ENCODE measurements at regions of chr10 and their contacts with region 1.

Region 1: GRCh38 chr10:101840741-101841453 is 2.7 kb downstream of the KCNIP2 start:
- DNase-seq: peak; percentile 88
- ATAC-seq: peak; percentile 59
- H3K4me3 ChIP-seq: peak overlapping the region in 4 of 5 experiments; percentile 44 to 79 (median 68)
- H3K4me3 Mint-ChIP-seq: peak overlapping the region; percentile 95
- H3K27ac ChIP-seq: peak overlapping the region in 1 of 2 donors; percentile 51
- H3K27ac Mint-ChIP-seq: peak overlapping the region; percentile 92
- H3K4me1 ChIP-seq: peaks cover 50 to 60% of the 10 kb centered on the region in 2 donors
- H3K4me1 Mint-ChIP-seq: peaks cover 52% of the 10 kb centered on the region
- H3K27me3 ChIP-seq: no peaks in the 10 kb centered on the region
- H3K27me3 Mint-ChIP-seq: no peaks in the 10 kb centered on the region
- CTCF ChIP-seq: peak; percentile 91

Region 2: GRCh38 chr10:101782811-101783735 is 57.8 kb before region 1 on chr10 and contains the start of gene NPM3:
- CTCF ChIA-PET with region 1: interaction called, 21 read pairs
- POLR2A ChIA-PET with region 1: no interaction called
- intact Hi-C with region 1: loop called (anchors 2 kb)
- DNase-seq: peak; percentile 78
- ATAC-seq: peak; percentile 66
- H3K4me3 ChIP-seq: peak within 1 kb of the TSS; percentile 18 to 73 (median 67)
- H3K4me3 Mint-ChIP-seq: peak within 1 kb of the TSS; percentile 99
- H3K27ac ChIP-seq: peak within 1 kb of the TSS; percentile 8 to 69
- H3K27ac Mint-ChIP-seq: peak within 1 kb of the TSS; percentile 90
- H3K4me1 ChIP-seq: peaks cover 32 to 57% of the 10 kb centered on the region in 2 donors
- H3K4me1 Mint-ChIP-seq: peaks cover 55% of the 10 kb centered on the region
- H3K27me3 ChIP-seq: peaks cover 0 to 16% (median 7%) of the 10 kb centered on the region in 4 experiments
- H3K27me3 Mint-ChIP-seq: peaks cover 6% of the 10 kb centered on the region
- CTCF ChIP-seq: no peak
- total RNA-seq, gene NPM3: 13.4 and 13.5 TPM in 2 replicates

Region 3: DNA sequence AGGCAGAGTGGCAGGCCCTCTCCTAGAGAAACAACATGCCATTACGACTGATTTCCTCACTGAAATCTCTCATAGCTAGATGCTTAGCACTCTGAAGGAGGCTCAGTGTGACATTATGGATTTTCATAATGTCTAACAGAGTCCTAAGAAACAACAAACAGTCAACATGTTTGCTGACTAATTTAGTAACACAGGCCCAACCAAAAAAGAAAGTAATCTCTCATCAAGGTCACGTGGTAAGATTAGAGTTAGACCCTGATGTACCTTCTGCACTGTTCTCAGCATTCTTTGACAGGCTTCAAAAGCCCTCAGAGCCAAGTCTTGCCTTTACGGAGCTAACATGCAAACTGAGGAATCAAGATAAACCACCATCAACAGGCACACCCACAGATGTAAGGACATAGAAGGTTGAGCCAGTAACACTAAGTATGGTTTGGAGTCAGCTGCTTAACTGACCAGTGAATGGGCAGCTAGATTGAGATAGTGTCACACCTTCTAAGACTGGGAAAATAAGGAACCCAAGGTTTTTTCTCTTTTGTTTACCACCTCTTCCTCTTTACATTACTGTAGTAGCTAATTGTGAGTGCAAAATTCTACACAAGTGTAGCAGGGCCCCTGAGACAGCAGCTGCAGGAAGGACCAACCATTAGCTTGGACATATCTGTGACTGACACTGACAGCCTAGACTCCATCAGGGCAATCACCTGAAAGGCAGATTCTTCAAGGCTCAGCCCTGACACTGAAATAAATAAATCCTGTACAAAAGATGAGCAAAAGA is 18.0 kb after region 1 on chr10:
- CTCF ChIA-PET with region 1: interaction called, 48 read pairs
- POLR2A ChIA-PET with region 1: interaction called, 3 read pairs
- intact Hi-C with region 1: no loop called
- DNase-seq: no peak
- ATAC-seq: no peak
- H3K4me3 ChIP-seq: no peak overlapping the region
- H3K4me3 Mint-ChIP-seq: peak overlapping the region; percentile 35
- H3K27ac ChIP-seq: peak overlapping the region; percentile 47 to 52
- H3K27ac Mint-ChIP-seq: peak overlapping the region; percentile 73
- H3K4me1 ChIP-seq: peaks cover 10 to 14% of the 10 kb centered on the region in 2 donors
- H3K4me1 Mint-ChIP-seq: peaks cover 21% of the 10 kb centered on the region
- H3K27me3 ChIP-seq: no peaks in the 10 kb centered on the region
- H3K27me3 Mint-ChIP-seq: no peaks in the 10 kb centered on the region
- CTCF ChIP-seq: no peak

Region 4: GRCh38 chr10:101897633-101898032 is 56.7 kb after region 1 on chr10:
- CTCF ChIA-PET with region 1: interaction called, 115 read pairs
- POLR2A ChIA-PET with region 1: interaction called, 6 read pairs
- intact Hi-C with region 1: loop called (anchors 2 kb)
- DNase-seq: no peak
- ATAC-seq: no peak
- H3K4me3 ChIP-seq: no peak overlapping the region
- H3K4me3 Mint-ChIP-seq: no peak overlapping the region
- H3K27ac ChIP-seq: no peak overlapping the region
- H3K27ac Mint-ChIP-seq: no peak overlapping the region
- H3K4me1 ChIP-seq: peaks cover 56 to 70% of the 10 kb centered on the region in 2 donors
- H3K4me1 Mint-ChIP-seq: peaks cover 74% of the 10 kb centered on the region
- H3K27me3 ChIP-seq: no peaks in the 10 kb centered on the region
- H3K27me3 Mint-ChIP-seq: no peaks in the 10 kb centered on the region
- CTCF ChIP-seq: no peak

Region 5: GRCh38 chr10:101995451-101996063 is 154.7 kb after region 1 on chr10:
- CTCF ChIA-PET with region 1: interaction called, 581 read pairs
- POLR2A ChIA-PET with region 1: no interaction called
- intact Hi-C with region 1: no loop called
- DNase-seq: no peak
- ATAC-seq: no peak
- H3K4me3 ChIP-seq: no peak overlapping the region
- H3K4me3 Mint-ChIP-seq: no peak overlapping the region
- H3K27ac ChIP-seq: peak overlapping the region in 1 of 2 donors; percentile 51
- H3K27ac Mint-ChIP-seq: peak overlapping the region; percentile 59
- H3K4me1 ChIP-seq: peaks cover 47 to 49% of the 10 kb centered on the region in 2 donors
- H3K4me1 Mint-ChIP-seq: peaks cover 45% of the 10 kb centered on the region
- H3K27me3 ChIP-seq: no peaks in the 10 kb centered on the region
- H3K27me3 Mint-ChIP-seq: no peaks in the 10 kb centered on the region
- CTCF ChIP-seq: no peak

Region 6: DNA sequence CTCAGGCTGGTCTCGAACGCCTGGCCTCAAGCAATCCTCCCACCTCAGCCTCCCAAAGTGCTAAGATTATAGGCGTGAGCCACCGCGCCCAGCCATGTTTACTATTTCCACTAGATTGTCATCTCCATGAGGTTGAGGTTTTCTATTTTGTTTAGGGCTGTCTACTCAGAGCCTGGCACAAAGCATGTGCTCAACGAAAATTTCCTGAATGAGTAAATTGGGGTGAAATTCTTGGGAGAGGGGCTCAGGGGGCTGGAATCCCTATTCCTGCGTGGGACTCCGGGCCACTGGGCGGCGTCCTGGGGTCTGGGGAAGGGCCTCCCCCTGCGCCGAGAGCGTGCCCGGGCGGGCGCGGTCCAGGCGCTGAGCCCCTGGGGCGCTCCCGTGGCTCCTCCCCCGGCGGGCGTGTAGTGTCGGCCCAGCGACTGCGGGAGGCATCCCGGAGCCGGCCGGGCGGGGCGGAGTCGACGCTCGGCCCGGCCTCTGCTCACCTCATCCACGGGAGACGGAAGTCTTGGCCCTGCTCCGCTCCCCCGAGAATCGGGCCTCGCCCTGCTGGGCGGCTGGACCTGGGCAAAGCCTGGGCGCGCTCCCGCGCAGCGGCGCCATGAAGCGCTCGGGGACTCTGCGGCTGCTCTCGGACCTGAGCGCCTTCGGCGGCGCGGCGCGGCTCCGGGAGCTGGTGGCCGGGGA is 224.1 kb after region 1 on chr10 and contains the start of gene HPS6:
- CTCF ChIA-PET with region 1: interaction called, 138 read pairs
- POLR2A ChIA-PET with region 1: interaction called, 3 read pairs
- intact Hi-C with region 1: loop called (anchors 2 kb)
- DNase-seq: peak; percentile 90
- ATAC-seq: peak; percentile 98
- H3K4me3 ChIP-seq: peak within 1 kb of the TSS; percentile 51 to 89 (median 73)
- H3K4me3 Mint-ChIP-seq: peak within 1 kb of the TSS; percentile 92
- H3K27ac ChIP-seq: peak within 1 kb of the TSS; percentile 63 to 90
- H3K27ac Mint-ChIP-seq: peak within 1 kb of the TSS; percentile 92
- H3K4me1 ChIP-seq: peaks cover 15 to 20% of the 10 kb centered on the region in 2 donors
- H3K4me1 Mint-ChIP-seq: peaks cover 23% of the 10 kb centered on the region
- H3K27me3 ChIP-seq: no peaks in the 10 kb centered on the region
- H3K27me3 Mint-ChIP-seq: no peaks in the 10 kb centered on the region
- CTCF ChIP-seq: no peak
- total RNA-seq, gene HPS6: 28.6 and 29.5 TPM in 2 replicates

Region 7: DNA sequence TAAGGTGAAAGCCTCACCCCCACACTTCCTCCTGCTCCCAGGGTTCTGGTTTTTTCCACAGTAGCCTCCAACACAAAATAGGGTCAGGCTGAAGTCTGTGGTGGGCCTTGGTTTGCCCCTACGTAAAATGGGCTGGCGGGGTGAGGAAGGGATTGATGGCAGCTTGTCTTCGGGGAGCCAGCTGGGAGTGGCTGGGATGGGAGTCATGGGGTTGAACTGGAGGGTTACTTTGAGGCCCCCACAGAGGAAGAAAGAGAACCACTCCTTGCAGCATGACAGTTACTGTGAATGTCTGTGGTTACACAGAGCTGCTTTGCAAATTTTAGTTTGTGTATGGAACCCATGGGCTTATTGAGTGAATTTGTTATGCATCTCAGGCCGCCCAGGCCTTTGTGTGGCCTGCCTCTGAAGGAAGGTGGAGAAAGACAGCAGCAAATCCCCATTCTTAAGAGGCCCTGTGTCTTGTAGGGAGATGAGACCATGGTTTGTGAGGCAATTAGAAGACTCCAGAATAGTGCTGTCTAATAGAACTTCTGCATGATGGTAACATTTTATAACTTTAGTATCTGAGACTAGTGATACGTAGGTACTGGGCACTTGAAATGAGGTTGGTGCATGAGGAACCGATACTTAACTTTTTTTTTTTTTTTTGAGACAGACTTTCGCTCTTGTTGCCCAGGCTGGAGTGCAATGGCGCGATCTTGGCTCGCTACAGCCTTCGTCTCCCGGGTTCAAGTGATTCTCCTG is 811.4 kb after region 1 on chr10:
- CTCF ChIA-PET with region 1: no interaction called
- POLR2A ChIA-PET with region 1: no interaction called
- intact Hi-C with region 1: no loop called
- DNase-seq: peak; percentile 76
- ATAC-seq: peak; percentile 54
- H3K4me3 ChIP-seq: peak overlapping the region in 2 of 5 experiments; percentile 23 to 35
- H3K4me3 Mint-ChIP-seq: peak overlapping the region; percentile 90
- H3K27ac ChIP-seq: peak overlapping the region; percentile 70 to 90
- H3K27ac Mint-ChIP-seq: peak overlapping the region; percentile 98
- H3K4me1 ChIP-seq: peaks cover 64 to 67% of the 10 kb centered on the region in 2 donors
- H3K4me1 Mint-ChIP-seq: peaks cover 71% of the 10 kb centered on the region
- H3K27me3 ChIP-seq: no peaks in the 10 kb centered on the region
- H3K27me3 Mint-ChIP-seq: no peaks in the 10 kb centered on the region
- CTCF ChIP-seq: no peak